ENCODE measurements at regions of chr17 and their contacts with region 1.

Region 1: GRCh38 chr17:83189044-83190003 is 109.9 kb downstream of the METRNL start:
- DNase-seq: no peak
- H3K4me3 ChIP-seq: no peak overlapping the region
- H3K27ac ChIP-seq: no peak overlapping the region
- H3K4me1 ChIP-seq: peaks cover 0 to 11% (median 11%) of the 10 kb centered on the region in 4 experiments
- H3K27me3 ChIP-seq: no peaks in the 10 kb centered on the region

Region 2: GRCh38 chr17:82985973-82986372 is 203.4 kb before region 1 on chr17:
- CTCF ChIA-PET with region 1: no interaction called
- POLR2A ChIA-PET with region 1: no interaction called
- DNase-seq: peak; percentile 62 to 93 (median 91)
- H3K4me3 ChIP-seq: peak overlapping the region in 6 of 7 experiments; percentile 2 to 57 (median 26)
- H3K27ac ChIP-seq: no peak overlapping the region
- H3K4me1 ChIP-seq: peaks cover 2 to 25% (median 23%) of the 10 kb centered on the region in 4 experiments
- H3K27me3 ChIP-seq: no peaks in the 10 kb centered on the region

Region 3: DNA sequence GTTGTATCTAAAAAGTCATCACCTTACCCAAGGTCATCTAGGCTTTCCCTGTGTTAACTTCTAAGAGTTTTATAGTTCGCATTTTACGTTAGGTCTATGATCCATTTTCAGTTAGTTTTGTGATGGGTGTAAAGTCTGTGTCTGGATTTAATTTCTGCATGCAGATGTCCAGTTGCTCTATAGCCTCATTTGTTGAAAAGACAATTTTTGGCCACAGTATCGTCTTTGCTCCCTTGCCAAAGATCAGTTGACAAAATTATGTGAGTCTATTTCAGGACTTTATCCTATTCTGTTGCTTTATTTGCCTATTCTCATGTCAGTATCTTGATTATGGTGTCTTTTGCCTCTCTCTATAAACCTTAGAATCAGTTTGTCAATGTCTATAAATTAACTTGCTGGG is 24.8 kb before region 1 on chr17:
- CTCF ChIA-PET with region 1: no interaction called
- POLR2A ChIA-PET with region 1: no interaction called
- DNase-seq: no peak
- H3K4me3 ChIP-seq: no peak overlapping the region
- H3K27ac ChIP-seq: no peak overlapping the region
- H3K4me1 ChIP-seq: no peaks in the 10 kb centered on the region
- H3K27me3 ChIP-seq: peaks cover 0 to 2% (median 0%) of the 10 kb centered on the region in 5 experiments

Region 4: DNA sequence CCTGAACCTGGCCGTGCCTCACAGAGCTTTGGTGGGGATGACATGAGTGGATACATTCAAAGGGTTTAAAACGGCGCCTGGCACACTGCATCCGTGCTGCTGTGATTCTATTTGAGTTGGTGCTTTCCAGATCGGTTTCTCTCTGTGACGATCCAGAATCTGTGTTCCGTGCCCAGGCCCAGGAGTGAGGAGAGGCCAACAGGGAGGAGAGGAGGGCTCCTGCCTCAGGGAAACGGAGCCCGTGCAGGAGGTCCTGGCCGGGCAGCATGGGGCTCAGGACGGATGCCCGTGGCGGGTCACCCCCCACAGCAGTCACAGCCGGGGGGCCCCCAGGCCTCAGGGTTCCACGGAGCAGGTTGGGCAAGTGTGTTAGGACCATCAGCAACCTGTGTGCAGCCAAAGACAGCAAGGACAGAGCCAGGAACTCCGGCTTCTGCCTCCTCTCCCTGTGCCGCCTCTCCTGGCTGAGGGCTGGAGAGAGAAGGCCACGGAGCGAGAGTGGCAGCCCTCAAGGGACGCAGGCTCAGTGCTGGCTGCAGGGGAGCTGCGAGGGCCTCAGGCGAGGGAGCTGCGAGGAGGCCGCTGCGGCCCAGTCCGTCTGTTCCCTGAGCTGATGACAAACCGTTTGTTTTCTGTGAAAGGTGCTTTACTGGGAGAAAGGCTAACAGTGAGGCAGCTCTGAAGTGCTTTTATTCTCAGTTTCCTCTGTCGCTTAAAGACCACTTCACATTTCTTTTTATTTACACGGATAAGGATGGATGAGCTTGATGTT is 10.6 kb before region 1 on chr17:
- CTCF ChIA-PET with region 1: interaction called, 11 read pairs
- POLR2A ChIA-PET with region 1: no interaction called
- DNase-seq: no peak
- H3K4me3 ChIP-seq: no peak overlapping the region
- H3K27ac ChIP-seq: no peak overlapping the region
- H3K4me1 ChIP-seq: no peaks in the 10 kb centered on the region
- H3K27me3 ChIP-seq: no peaks in the 10 kb centered on the region